CD8-positive, alpha-beta T cell (primary cell): ENCODE measurements at regions of chr5 and their contacts with region 1.

Region 1: GRCh38 chr5:149367249-149367971 is 9.6 kb downstream of the PCYOX1L start:
- DNase-seq: peak; percentile 31 to 70 (median 59)
- ATAC-seq: peak; percentile 67
- H3K4me3 ChIP-seq: no peak overlapping the region
- H3K4me3 Mint-ChIP-seq: no peak overlapping the region
- H3K27ac ChIP-seq: no peak overlapping the region
- H3K27ac Mint-ChIP-seq: peak overlapping the region; percentile 41
- H3K4me1 ChIP-seq: peaks cover 8% of the 10 kb centered on the region
- H3K4me1 Mint-ChIP-seq: peaks cover 24% of the 10 kb centered on the region
- H3K27me3 ChIP-seq: no peaks in the 10 kb centered on the region
- H3K27me3 Mint-ChIP-seq: no peaks in the 10 kb centered on the region
- CTCF ChIP-seq: peak; percentile 57

Region 2: DNA sequence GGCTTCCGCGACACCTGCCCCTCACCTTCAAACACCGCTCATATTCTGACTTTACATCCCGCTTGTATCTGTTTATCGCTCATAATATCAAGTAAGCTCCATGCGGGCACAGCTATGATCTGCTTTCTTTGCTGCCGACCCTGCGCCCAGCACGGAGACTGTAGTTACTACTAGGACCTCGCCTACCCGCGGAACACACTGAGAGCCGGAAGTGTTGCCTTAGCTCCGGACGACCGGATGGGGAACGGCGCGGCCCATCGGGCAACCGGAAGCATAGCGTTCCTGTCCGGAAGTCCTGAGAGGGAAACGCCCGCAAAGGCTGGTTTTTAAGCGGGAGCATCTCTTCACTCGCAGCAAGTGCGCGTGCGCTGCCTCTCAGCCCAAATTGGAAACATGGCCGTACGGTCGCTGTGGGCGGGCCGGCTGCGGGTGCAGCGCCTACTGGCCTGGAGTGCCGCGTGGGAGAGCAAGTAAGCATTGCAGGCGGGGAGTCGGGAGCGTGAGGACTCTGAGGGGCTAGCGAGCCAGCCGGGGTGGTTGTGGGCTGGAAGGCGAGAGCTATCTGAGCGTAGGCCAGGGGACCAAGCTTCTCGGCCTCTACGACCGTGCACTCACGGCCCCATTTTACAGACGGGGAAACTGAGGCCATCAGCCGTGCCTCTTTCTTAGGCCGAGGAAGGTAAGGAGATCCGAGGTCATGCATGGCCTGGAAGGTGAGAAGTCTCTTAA is 22.1 kb before region 1 on chr5 and contains the start of gene GRPEL2:
- CTCF ChIA-PET with region 1: interaction called, 76 read pairs
- POLR2A ChIA-PET with region 1: interaction called, 7 read pairs
- intact Hi-C with region 1: no loop called
- DNase-seq: peak; percentile 65 to 93 (median 84)
- ATAC-seq: peak; percentile 65
- H3K4me3 ChIP-seq: peak within 1 kb of the TSS; percentile 94 to 95
- H3K4me3 Mint-ChIP-seq: peak within 1 kb of the TSS; percentile 92
- H3K27ac ChIP-seq: peak within 1 kb of the TSS; percentile 63 to 88
- H3K27ac Mint-ChIP-seq: peak within 1 kb of the TSS; percentile 90
- H3K4me1 ChIP-seq: peaks cover 53% of the 10 kb centered on the region
- H3K4me1 Mint-ChIP-seq: peaks cover 60% of the 10 kb centered on the region
- H3K27me3 ChIP-seq: no peaks in the 10 kb centered on the region
- H3K27me3 Mint-ChIP-seq: no peaks in the 10 kb centered on the region
- CTCF ChIP-seq: no peak
- total RNA-seq, gene GRPEL2: 9.1 to 9.7 TPM

Region 3: DNA sequence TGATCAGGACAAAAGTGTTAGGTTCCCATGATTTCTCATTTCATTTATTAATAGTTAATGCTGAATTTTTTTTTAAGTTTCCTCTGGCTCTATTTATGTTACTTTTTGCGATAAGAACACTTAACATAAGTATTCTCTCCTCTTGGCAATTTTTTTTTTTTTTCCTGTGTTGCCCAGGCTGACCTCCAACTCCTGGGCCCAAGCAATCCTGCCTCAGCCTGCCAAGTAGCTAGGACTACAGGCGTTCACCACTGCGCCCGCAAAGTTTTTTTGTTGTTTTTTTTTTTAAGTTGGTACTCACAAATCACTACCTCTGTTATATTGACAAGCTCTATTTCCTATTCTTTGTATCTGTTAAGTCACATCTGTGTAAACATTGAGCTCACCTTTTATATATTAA is 15.2 kb before region 1 on chr5:
- CTCF ChIA-PET with region 1: interaction called, 76 read pairs
- POLR2A ChIA-PET with region 1: interaction called, 8 read pairs
- intact Hi-C with region 1: no loop called
- DNase-seq: no peak
- ATAC-seq: no peak
- H3K4me3 ChIP-seq: no peak overlapping the region
- H3K4me3 Mint-ChIP-seq: no peak overlapping the region
- H3K27ac ChIP-seq: no peak overlapping the region
- H3K27ac Mint-ChIP-seq: no peak overlapping the region
- H3K4me1 ChIP-seq: peaks cover 39% of the 10 kb centered on the region
- H3K4me1 Mint-ChIP-seq: peaks cover 73% of the 10 kb centered on the region
- H3K27me3 ChIP-seq: no peaks in the 10 kb centered on the region
- H3K27me3 Mint-ChIP-seq: no peaks in the 10 kb centered on the region
- CTCF ChIP-seq: no peak